ENCODE measurements at regions of chr1 and their contacts with region 1.

Region 1: DNA sequence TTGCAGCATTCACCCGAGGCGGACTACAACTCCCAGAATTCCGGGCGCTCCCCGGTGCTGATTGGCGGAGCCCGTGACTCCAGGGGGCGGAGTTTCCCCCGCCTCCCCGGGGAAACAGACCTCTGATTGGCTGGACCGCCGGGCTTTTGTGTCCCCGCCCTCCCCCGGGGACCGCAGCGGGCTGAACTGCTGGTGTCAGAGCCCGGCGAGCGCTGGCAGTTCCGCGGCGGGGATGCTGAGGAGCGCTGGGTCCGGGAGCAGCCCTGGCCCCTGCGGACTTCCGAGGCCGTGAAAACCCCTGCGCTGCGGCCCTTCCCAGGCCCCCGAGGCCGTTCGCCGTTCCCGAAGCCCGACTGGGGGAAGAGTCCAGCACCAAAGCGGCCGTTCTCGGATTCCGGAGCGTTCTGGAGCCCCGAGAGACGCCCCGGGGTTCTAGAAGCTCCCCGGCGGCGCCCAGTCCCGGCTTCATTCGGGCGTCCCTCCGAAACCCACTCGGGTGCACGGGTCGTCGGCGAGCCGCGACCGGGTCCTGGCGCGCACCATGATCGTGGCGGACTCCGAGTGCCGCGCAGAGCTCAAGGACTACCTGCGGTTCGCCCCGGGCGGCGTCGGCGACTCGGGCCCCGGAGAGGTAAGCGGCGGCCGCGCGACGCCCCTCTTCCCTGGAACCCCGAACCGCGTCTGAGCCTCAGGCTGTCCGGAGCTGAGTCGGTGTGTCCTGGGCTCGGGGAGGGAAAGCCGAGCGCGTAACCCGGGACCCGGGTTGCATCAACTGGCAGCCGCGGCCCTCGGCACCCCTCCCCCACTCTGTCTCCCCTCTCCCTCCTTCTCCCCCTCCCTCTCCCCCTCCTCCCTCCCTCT is at the start of gene SESN2:
- DNase-seq: peak; percentile 100
- H3K4me3 ChIP-seq: peak within 1 kb of the TSS; percentile 89 to 100 (median 95)
- H3K27ac ChIP-seq: peak within 1 kb of the TSS; percentile 95 to 98 (median 97)
- H3K4me1 ChIP-seq: peaks cover 16 to 43% (median 36%) of the 10 kb centered on the region in 4 donors
- H3K27me3 ChIP-seq: no peaks in the 10 kb centered on the region
- CTCF ChIP-seq: peak in 1 of 3 experiments; percentile 28
- EP300 ChIP-seq: no peak
- POLR2A ChIP-seq: peak; percentile 96
- total RNA-seq, gene SESN2: 7.5 to 16.4 (median 11.9) TPM

Region 2: GRCh38 chr1:27719286-27720251 is 540.0 kb before region 1 on chr1:
- intact Hi-C with region 1: no loop called
- DNase-seq: no peak
- H3K4me3 ChIP-seq: no peak overlapping the region
- H3K27ac ChIP-seq: no peak overlapping the region
- H3K4me1 ChIP-seq: peaks cover 0 to 2% (median under 1%) of the 10 kb centered on the region in 4 donors
- H3K27me3 ChIP-seq: no peaks in the 10 kb centered on the region
- CTCF ChIP-seq: no peak
- EP300 ChIP-seq: no peak
- POLR2A ChIP-seq: no peak

Region 3: DNA sequence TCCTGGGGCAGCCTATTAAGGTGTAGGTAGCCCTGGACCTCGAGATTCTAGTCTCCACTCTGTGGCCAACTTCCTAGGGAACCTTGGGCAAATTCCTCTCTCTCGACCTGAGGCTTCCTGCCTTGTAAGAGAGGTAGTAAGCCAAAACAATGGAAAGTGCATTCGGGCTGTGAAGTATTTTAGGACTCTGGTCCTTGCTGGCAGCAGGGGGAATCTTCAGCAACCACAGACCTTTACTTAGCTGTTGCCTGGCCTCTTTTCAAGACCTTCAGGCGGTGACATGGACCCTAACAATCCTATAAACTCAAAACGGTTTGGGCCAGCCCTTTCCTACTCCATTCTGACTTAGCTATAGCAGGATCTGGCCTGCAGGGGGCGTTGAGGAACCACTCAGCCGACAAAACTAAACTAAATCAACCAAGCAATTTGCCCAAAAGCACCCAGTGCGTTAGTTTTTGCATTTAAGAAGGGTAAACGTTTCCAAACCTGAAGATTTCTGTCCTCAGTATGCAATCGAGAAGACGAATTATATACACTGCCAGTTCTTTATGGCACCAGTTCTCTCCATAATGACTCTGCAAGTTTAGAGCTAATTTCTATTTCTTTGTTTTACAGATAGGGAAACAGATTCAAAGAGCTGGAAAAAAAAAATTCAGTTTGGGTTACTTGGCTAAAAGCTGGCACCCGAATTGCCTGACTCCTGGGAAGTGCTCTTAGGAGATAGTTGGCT is 11.1 kb before region 1 on chr1:
- intact Hi-C with region 1: loop called (anchors 2 kb)
- DNase-seq: peak; percentile 96
- H3K4me3 ChIP-seq: peak overlapping the region in 3 of 4 donors; percentile 25 to 29 (median 29)
- H3K27ac ChIP-seq: peak overlapping the region; percentile 83 to 91 (median 86)
- H3K4me1 ChIP-seq: peaks cover 22 to 36% (median 29%) of the 10 kb centered on the region in 4 donors
- H3K27me3 ChIP-seq: no peaks in the 10 kb centered on the region
- CTCF ChIP-seq: peak; percentile 94 to 96 (median 96)
- EP300 ChIP-seq: no peak
- POLR2A ChIP-seq: no peak

Region 4: GRCh38 chr1:28329395-28330153 is 70.0 kb after region 1 on chr1:
- intact Hi-C with region 1: loop called (anchors 5 kb)
- DNase-seq: no peak
- H3K4me3 ChIP-seq: peak overlapping the region; percentile 61 to 69 (median 64)
- H3K27ac ChIP-seq: peak overlapping the region; percentile 80 to 90 (median 83)
- H3K4me1 ChIP-seq: peaks cover 15 to 25% (median 21%) of the 10 kb centered on the region in 4 donors
- H3K27me3 ChIP-seq: no peaks in the 10 kb centered on the region
- CTCF ChIP-seq: no peak
- EP300 ChIP-seq: no peak
- POLR2A ChIP-seq: no peak

Region 5: DNA sequence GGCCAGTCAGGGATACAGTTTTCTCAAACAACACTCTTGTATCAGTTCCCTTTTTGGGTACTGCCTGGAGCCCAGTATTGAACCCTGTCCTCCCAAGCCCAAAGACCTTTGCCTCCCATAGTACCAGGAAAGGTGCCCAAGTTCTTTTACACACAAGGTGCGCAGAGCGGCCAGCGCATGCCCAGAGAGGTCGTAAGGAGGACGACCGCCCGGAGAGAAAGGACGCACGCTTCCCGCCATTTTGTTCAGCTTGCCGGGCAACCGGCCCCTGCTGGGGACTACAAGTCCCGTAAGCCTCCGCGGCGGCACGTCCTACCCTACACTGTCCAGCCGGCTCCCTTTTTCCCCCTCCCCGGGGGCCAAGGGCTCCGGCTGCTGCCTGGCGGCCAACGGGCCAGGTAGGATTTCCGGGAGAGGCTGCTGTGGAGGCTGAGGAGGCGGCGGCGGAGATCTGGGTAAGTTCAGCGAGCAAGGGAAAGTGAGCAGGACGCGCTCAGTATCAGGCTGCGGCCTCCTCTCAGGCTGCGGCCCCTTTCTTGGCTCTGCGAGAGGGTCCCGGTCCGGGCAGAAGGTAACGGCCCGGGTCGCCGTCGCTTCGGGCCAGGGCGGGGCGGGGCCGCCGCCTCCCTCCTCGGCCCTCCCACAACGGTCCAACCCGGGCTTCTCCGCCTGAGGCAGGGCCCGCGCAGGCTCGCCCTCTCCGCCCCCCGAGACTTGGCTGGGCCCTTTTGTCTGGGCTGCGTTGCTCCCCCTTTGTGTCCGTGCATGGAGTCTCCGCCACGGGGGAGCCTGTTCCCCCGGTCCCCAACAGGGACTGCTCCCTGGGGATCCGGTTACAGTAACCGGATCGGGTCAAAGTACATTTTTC is 110.1 kb after region 1 on chr1 and contains the start of gene PHACTR4:
- intact Hi-C with region 1: loop called (anchors 2 kb)
- DNase-seq: peak; percentile 96
- H3K4me3 ChIP-seq: peak within 1 kb of the TSS; percentile 81 to 92 (median 88)
- H3K27ac ChIP-seq: peak within 1 kb of the TSS; percentile 92 to 98 (median 94)
- H3K4me1 ChIP-seq: peaks cover 10 to 42% (median 39%) of the 10 kb centered on the region in 4 donors
- H3K27me3 ChIP-seq: no peaks in the 10 kb centered on the region
- CTCF ChIP-seq: peak in 2 of 3 experiments; percentile 6 to 12
- EP300 ChIP-seq: no peak
- POLR2A ChIP-seq: peak; percentile 73
- total RNA-seq, gene PHACTR4: 21.0 to 32.4 (median 27.7) TPM

Region 6: DNA sequence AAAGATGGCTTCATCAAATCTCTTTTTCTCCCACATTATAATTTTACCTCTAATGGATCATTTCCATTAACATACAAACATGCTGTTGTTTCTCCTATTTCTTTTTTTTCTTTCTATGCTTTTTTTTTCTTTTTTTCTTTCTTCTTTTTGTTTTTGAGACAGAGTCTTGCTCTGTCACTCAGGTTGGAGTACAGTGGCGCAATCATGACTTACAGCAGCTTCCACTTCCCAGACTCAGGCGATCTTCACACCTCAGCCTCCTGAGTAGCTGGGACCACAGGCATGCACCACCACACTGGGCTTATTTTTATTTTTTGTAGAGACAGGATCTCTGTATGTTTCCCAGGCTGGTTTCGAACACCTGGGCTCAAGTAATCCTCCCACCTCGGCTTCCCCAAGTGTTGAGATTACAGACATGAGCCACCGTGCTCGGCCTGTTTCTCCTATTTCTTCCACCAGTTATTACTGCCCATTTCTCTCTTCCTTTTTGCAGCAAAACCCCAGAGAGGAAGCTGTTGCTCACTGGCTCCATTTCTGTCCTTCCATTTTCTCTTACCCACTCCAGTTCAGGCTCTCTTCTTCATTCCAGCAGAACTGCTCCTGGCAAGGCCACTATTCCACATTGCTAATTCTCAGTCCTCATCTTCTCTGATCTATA is 520.3 kb after region 1 on chr1:
- intact Hi-C with region 1: no loop called
- DNase-seq: no peak
- H3K4me3 ChIP-seq: no peak overlapping the region
- H3K27ac ChIP-seq: no peak overlapping the region
- H3K4me1 ChIP-seq: peaks cover 7 to 9% (median 8%) of the 10 kb centered on the region in 4 donors
- H3K27me3 ChIP-seq: no peaks in the 10 kb centered on the region
- CTCF ChIP-seq: no peak
- EP300 ChIP-seq: no peak
- POLR2A ChIP-seq: no peak